Activated T-helper 2 cell treated with anti-CD3 and anti-CD28 coated beads, Interferon-gamma antibody, Interleukin-2, Interleukin-4, amounts not matched to agents 10 μg/mL and 5 μg/mL and 100 μg/mL, durations not matched to agents 14 hours and 24 hours and 36 hours (primary cell): ENCODE measurements at regions of chr7 and their contacts with region 1.

Region 1: GRCh38 chr7:32490127-32490822 is at the start of gene LSM5:
- DNase-seq: peak; percentile 87
- H3K4me3 Mint-ChIP-seq: peak within 1 kb of the TSS; percentile 89
- H3K27ac Mint-ChIP-seq: peak within 1 kb of the TSS; percentile 94
- H3K4me1 Mint-ChIP-seq: peaks cover 28% of the 10 kb centered on the region
- H3K27me3 Mint-ChIP-seq: no peaks in the 10 kb centered on the region
- total RNA-seq, gene LSM5: 78.9 and 88.5 TPM in 2 replicates

Region 2: GRCh38 chr7:32436146-32436928 is 53.9 kb before region 1 on chr7:
- intact Hi-C with region 1: no loop called
- DNase-seq: no peak
- H3K4me3 Mint-ChIP-seq: no peak overlapping the region
- H3K27ac Mint-ChIP-seq: no peak overlapping the region
- H3K4me1 Mint-ChIP-seq: no peaks in the 10 kb centered on the region
- H3K27me3 Mint-ChIP-seq: no peaks in the 10 kb centered on the region

Region 3: GRCh38 chr7:32539919-32540531 is 49.8 kb after region 1 on chr7:
- intact Hi-C with region 1: loop called (anchors 5 kb)
- DNase-seq: no peak
- H3K4me3 Mint-ChIP-seq: no peak overlapping the region
- H3K27ac Mint-ChIP-seq: peak overlapping the region; percentile 28
- H3K4me1 Mint-ChIP-seq: peaks cover 17% of the 10 kb centered on the region
- H3K27me3 Mint-ChIP-seq: no peaks in the 10 kb centered on the region

Region 4: DNA sequence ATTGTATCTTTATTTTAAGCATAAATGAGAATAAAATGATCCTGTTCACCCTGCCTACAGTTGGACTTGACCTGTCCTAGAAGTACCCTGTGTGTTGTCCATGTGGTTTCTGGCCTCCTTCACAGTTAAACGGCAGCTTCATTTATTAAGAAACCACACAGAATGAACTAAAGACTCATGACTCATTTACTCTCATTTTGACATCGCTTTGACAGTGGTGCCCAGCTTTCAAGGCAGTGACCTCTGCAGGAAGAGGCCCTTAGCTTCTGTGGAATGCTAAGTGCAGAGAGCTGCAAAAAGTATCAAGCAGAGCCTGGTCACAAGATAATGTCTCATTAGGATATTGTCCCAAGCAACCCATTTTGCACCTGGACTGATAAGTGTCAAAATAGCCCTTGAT is 98.4 kb after region 1 on chr7:
- intact Hi-C with region 1: loop called (anchors 1 kb)
- DNase-seq: no peak
- H3K4me3 Mint-ChIP-seq: no peak overlapping the region
- H3K27ac Mint-ChIP-seq: peak overlapping the region; percentile 77
- H3K4me1 Mint-ChIP-seq: peaks cover 30% of the 10 kb centered on the region
- H3K27me3 Mint-ChIP-seq: no peaks in the 10 kb centered on the region

Region 5: DNA sequence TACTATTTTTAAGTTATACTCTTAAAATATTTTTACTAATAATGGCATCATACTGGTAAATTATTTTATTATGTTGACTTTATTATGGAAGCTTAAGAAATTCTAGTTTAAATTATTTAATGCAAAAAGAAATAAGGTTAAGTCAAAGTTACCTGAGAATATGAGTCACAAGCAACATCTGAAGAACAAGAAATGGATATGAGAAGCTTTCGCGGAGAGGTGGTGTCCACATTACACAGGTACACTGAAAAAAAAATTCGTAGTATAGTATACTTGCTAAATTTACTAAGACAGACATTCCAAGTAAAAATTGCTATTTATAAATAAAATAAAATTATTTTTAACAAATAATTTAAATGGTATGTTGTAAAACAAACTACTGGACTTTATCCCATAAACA is 148.8 kb after region 1 on chr7:
- intact Hi-C with region 1: loop called (anchors 5 kb)
- DNase-seq: no peak
- H3K4me3 Mint-ChIP-seq: no peak overlapping the region
- H3K27ac Mint-ChIP-seq: no peak overlapping the region
- H3K4me1 Mint-ChIP-seq: peaks cover 6% of the 10 kb centered on the region
- H3K27me3 Mint-ChIP-seq: peaks cover 13% of the 10 kb centered on the region